Posterior vena cava (tissue), 2 donors: ENCODE measurements at regions of chr2 and their contacts with region 1.

Region 1: GRCh38 chr2:227684276-227684675 is 17.7 kb downstream of the SCYGR5 start:
- DNase-seq: no peak

Region 2: GRCh38 chr2:227528803-227529202 is 155.5 kb before region 1 on chr2:
- intact Hi-C with region 1: no loop called
- DNase-seq: no peak

Region 3: GRCh38 chr2:227655454-227655853 is 28.8 kb before region 1 on chr2:
- intact Hi-C with region 1: loop called in 1 of 2 experiments (anchors 1 kb)
- DNase-seq: no peak